ENCODE measurements at regions of chr6 and their contacts with region 1.

Region 1: DNA sequence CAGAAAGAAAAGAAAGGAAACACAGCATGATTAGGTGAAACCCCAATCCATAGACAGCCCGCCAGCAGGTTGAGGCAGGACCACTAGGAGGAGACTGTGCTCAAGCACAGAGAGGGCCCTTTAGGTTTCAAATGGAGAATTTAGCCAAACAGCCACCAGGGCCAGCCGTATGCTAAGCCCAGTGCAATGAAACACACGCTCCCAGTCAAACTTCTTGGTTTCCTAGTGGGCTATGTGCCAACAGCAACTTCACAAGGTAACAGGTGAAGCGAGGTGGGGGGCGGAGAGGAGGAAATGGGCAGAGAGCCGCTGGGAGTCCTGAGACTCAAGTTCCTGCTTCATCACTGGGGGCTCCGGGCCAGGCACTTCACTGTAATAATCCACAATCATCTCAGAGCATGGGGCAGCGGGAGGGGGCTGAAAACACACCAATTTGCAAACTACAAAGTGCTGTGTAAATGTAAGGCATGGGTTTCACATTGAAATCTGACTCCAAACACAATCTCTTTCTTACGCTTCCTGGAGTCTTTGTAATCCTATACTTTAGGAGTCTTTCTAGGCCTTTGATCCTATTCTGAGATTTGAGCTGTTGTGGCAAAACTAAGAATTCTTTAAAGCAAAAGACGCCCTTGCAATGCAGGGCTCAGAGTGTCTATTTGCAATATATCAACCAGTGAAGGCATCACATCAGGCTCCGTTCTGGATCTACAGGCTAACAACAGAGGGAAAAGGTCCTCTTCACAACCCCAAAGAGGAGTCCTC is 117.3 kb downstream of the OPRM1 start:
- H3K4me3 Mint-ChIP-seq: peak overlapping the region; percentile 7
- H3K27ac Mint-ChIP-seq: peak overlapping the region; percentile 73
- H3K4me1 Mint-ChIP-seq: peaks cover 54% of the 10 kb centered on the region
- H3K27me3 Mint-ChIP-seq: peaks cover 2% of the 10 kb centered on the region

Region 2: DNA sequence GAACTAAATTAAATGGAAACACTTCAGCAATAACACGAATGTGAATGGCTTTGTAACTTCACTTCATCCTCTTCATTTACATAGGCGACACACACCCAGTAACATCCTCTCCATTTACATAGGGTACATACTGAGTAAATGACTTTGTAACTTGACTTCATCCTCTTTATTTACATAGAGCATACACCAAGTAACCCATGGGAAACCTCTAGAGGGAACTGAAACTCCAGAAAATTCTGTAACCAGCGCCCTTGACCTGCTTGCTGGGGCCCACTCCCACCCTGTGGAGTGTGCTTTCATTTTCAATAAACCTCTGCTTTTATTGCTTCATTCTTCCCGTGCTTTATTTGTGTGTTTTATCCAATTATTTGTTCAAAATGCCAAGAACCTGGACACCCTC is 198.9 kb before region 1 on chr6:
- intact Hi-C with region 1: no loop called
- H3K4me3 Mint-ChIP-seq: no peak overlapping the region
- H3K27ac Mint-ChIP-seq: no peak overlapping the region
- H3K4me1 Mint-ChIP-seq: peaks cover 21% of the 10 kb centered on the region
- H3K27me3 Mint-ChIP-seq: no peaks in the 10 kb centered on the region

Region 3: DNA sequence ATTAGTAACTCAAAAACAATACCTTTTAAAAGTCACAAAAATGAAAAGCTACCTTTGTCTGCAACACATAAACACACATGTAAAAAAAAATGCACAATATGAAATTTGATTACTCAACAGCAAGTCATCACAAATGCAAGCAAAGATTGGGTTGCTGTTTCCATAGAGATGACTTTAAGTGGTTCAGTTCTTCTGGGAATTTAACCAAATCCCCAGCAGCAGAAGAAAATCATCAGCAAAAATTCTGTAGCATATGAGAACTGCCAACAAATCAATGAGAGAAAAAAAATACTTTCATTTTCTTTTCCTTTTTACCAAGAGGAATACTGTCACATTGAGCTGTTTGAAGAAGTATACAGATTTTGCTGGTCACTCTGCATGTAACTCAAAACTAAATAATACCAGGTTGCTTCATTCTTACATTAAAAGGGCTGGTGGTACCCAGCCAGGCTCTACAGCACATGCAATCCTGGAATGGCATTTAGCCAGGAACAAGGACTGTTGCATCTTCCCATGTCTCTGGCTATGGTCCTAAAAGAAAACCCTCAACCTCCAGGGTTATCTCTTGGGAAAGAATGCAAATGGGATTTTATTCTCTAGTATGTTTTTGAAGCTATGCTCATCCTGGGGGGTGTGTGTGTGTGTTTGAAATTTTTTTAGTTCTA is 41.0 kb after region 1 on chr6:
- intact Hi-C with region 1: loop called (anchors 5 kb)
- H3K4me3 Mint-ChIP-seq: peak overlapping the region; percentile 74
- H3K27ac Mint-ChIP-seq: peak overlapping the region; percentile 98
- H3K4me1 Mint-ChIP-seq: peaks cover 70% of the 10 kb centered on the region
- H3K27me3 Mint-ChIP-seq: no peaks in the 10 kb centered on the region

Region 4: DNA sequence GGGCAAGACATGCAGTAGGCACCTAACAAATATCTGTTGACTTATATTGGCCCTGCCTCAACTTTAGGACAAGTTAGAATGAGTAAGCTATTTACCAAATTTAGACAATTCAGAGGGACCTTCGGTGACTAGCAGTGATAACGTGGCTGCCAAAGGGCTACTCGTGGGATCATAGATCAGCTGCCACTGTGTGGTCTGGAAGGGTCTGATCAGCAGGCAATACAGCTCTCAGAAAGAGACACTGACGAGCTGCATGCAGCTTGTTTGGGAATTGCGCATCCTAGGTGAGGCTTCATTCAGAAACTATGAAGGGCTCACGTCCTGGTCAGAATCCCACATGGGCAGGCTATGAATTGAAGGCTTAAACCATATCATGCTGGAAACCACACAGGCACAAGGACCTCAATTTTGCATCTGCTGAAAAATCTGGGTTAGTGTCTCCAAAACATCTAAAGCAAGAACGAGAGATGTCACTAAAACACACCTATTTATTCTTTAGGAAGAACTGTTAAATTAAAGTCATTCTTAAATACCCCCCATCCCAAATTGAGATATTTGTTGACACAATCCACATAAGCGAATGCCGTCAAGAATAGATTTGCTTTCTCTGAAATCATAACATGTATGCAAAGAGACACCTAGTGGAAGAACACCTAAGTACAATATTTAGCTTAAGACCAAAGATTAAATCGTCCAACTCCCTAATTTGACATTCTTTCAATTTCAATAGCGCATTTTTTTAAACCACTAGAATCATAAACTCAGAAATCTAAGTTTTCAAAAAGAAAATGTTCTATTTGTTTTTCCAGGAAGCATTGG is 120.7 kb after region 1 on chr6:
- intact Hi-C with region 1: loop called (anchors 1 kb)
- H3K4me3 Mint-ChIP-seq: no peak overlapping the region
- H3K27ac Mint-ChIP-seq: peak overlapping the region; percentile 79
- H3K4me1 Mint-ChIP-seq: peaks cover 45% of the 10 kb centered on the region
- H3K27me3 Mint-ChIP-seq: no peaks in the 10 kb centered on the region

Region 5: DNA sequence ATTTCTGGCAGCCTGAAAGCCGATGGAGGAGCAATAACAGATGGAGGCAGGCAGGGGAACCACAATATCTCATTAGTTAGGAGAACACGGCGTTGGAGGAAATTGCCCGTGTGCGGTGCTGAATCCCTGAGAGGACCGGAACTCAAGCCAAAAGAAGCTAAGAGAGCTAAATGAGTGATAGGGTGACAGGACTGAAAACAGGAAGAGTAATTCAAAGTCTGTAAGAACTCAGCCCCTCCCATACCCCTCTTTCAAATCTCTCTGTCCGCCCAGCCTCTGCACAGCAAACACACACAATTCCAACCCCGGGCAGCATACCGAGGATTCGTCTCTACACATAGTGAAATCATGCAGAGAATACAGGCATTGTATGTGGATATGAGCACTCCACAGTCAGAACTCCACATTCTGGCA is 202.9 kb after region 1 on chr6:
- intact Hi-C with region 1: loop called (anchors 5 kb)
- H3K4me3 Mint-ChIP-seq: peak overlapping the region; percentile 55
- H3K27ac Mint-ChIP-seq: peak overlapping the region; percentile 82
- H3K4me1 Mint-ChIP-seq: peaks cover 50% of the 10 kb centered on the region
- H3K27me3 Mint-ChIP-seq: no peaks in the 10 kb centered on the region

Region 6: GRCh38 chr6:154370545-154370944 is 214.2 kb after region 1 on chr6:
- intact Hi-C with region 1: loop called (anchors 2 kb)
- H3K4me3 Mint-ChIP-seq: peak overlapping the region; percentile 46
- H3K27ac Mint-ChIP-seq: peak overlapping the region; percentile 76
- H3K4me1 Mint-ChIP-seq: peaks cover 53% of the 10 kb centered on the region
- H3K27me3 Mint-ChIP-seq: no peaks in the 10 kb centered on the region

Region 7: DNA sequence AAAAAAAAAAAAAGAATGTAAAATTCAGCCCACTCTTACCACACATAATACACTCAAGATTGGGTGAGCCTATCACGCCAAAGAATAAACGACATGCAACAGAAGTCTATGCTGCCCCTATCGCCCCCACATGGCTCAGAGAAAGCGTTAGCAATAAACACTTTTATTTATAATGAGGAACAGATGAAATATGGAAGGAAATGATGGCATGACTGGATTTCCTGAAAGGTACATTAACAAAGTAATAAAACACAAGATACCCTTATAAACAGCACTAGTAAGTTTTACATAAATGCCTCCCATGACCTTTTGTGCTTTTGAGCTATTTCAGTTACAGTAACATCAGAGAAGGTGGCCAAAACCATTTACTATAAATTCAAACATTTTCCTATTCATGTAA is 505.5 kb after region 1 on chr6:
- intact Hi-C with region 1: loop called (anchors 10 kb)
- H3K4me3 Mint-ChIP-seq: no peak overlapping the region
- H3K27ac Mint-ChIP-seq: no peak overlapping the region
- H3K4me1 Mint-ChIP-seq: peaks cover 8% of the 10 kb centered on the region
- H3K27me3 Mint-ChIP-seq: no peaks in the 10 kb centered on the region

Region 8: DNA sequence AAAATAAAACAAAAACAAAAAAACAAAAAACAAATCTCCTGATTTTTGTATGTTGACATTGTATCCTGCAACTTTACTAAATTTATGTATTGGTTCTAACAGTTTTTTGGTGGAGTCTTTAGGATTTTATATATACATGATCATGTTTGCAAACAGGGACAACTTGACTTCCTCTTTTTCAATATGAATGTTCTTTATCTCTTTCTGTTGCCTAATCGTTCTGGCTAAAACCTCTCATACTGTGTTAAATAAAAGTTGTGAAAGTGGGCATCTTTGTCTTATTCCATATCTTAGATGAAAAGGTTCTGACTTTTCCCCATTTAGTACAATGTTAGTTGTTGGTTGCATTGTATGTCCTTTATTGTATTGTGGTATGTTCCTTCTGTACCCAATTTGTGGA is 1561.1 kb after region 1 on chr6:
- intact Hi-C with region 1: no loop called
- H3K4me3 Mint-ChIP-seq: no peak overlapping the region
- H3K27ac Mint-ChIP-seq: no peak overlapping the region
- H3K4me1 Mint-ChIP-seq: no peaks in the 10 kb centered on the region
- H3K27me3 Mint-ChIP-seq: no peaks in the 10 kb centered on the region